ENCODE measurements at regions of chr11 and their contacts with region 1.

Region 1: DNA sequence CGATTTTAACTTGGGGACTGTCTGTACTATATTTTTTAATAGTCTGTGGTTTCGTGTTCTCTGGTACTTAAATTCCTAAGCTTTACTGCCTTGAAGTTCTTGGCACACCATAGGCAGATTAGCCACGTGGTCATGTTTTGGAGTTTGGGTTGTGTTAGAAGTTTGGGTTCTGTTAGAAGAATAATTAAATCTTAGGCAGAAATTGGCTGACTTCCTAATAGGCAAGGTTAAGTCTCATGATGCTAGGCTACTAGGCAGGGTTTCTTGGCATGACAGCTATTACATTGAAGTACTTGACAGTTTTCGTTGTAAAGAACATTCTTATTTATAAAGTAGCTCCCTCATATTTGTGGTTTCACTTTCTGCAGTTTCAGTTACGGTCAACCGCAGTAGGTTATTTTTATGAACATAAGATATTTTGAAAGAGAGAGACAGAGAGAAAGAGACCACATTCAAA is 30.0 kb upstream of the MMP7 start:
- DNase-seq: peak; percentile 69
- H3K4me3 Mint-ChIP-seq: peak overlapping the region; percentile 61
- H3K27ac Mint-ChIP-seq: peak overlapping the region; percentile 96
- H3K4me1 Mint-ChIP-seq: peaks cover 33% of the 10 kb centered on the region
- H3K27me3 Mint-ChIP-seq: no peaks in the 10 kb centered on the region
- CTCF ChIP-seq: no peak

Region 2: GRCh38 chr11:102513869-102514268 is 46.7 kb before region 1 on chr11:
- CTCF ChIA-PET with region 1: interaction called, 3 read pairs
- POLR2A ChIA-PET with region 1: interaction called, 12 read pairs
- intact Hi-C with region 1: no loop called
- DNase-seq: peak; percentile 92
- H3K4me3 Mint-ChIP-seq: no peak overlapping the region
- H3K27ac Mint-ChIP-seq: peak overlapping the region; percentile 44
- H3K4me1 Mint-ChIP-seq: peaks cover 11% of the 10 kb centered on the region
- H3K27me3 Mint-ChIP-seq: no peaks in the 10 kb centered on the region
- CTCF ChIP-seq: no peak

Region 3: DNA sequence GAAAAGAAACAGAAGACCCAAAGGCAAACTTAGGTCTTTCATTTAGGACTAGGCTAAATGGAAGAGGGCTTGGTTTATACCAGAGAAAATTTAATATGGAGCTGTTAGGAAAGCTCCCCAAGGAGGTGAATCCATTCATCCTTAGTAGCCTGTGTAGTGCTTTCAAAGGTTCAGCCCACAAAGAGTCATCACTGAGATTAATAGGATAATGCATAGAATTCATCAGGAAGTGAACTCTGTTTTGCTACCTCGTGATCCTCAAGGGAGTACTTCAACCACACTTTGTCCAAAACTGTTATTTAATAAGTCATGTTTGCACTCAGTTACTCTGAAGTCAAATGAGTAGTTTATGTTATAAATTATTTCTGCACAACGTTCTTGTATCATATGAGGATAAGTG is 13.3 kb after region 1 on chr11:
- CTCF ChIA-PET with region 1: no interaction called
- POLR2A ChIA-PET with region 1: interaction called, 14 read pairs
- intact Hi-C with region 1: no loop called
- DNase-seq: peak; percentile 62
- H3K4me3 Mint-ChIP-seq: no peak overlapping the region
- H3K27ac Mint-ChIP-seq: no peak overlapping the region
- H3K4me1 Mint-ChIP-seq: no peaks in the 10 kb centered on the region
- H3K27me3 Mint-ChIP-seq: no peaks in the 10 kb centered on the region
- CTCF ChIP-seq: no peak

Region 4: GRCh38 chr11:102599642-102600261 is 39.2 kb after region 1 on chr11:
- CTCF ChIA-PET with region 1: interaction called, 5 read pairs
- POLR2A ChIA-PET with region 1: interaction called, 17 read pairs
- intact Hi-C with region 1: loop called (anchors 1 kb)
- DNase-seq: peak; percentile 92
- H3K4me3 Mint-ChIP-seq: peak overlapping the region; percentile 31
- H3K27ac Mint-ChIP-seq: peak overlapping the region; percentile 88
- H3K4me1 Mint-ChIP-seq: peaks cover 37% of the 10 kb centered on the region
- H3K27me3 Mint-ChIP-seq: no peaks in the 10 kb centered on the region
- CTCF ChIP-seq: no peak

Region 5: DNA sequence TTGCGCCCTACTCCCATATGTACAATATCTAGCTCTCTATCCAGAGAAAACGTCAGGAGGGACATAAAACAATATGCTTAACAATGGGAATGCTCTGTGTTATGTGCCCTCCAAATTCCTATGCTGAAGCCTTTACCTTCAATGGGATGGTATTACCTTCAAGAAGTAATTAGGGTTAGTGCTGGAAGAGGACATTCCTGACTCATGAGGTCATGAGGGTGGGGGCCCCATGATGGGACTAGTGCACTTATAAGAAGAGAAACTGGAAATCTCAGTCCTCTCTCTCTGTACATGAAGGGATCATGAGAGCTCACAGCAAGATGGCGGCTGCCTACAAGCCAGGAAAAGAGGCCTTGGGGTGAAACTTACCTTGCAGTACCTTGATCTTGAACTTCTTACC is 44.3 kb after region 1 on chr11:
- CTCF ChIA-PET with region 1: interaction called, 5 read pairs
- POLR2A ChIA-PET with region 1: interaction called, 17 read pairs
- intact Hi-C with region 1: no loop called
- DNase-seq: no peak
- H3K4me3 Mint-ChIP-seq: no peak overlapping the region
- H3K27ac Mint-ChIP-seq: no peak overlapping the region
- H3K4me1 Mint-ChIP-seq: peaks cover 24% of the 10 kb centered on the region
- H3K27me3 Mint-ChIP-seq: no peaks in the 10 kb centered on the region
- CTCF ChIP-seq: no peak

Region 6: DNA sequence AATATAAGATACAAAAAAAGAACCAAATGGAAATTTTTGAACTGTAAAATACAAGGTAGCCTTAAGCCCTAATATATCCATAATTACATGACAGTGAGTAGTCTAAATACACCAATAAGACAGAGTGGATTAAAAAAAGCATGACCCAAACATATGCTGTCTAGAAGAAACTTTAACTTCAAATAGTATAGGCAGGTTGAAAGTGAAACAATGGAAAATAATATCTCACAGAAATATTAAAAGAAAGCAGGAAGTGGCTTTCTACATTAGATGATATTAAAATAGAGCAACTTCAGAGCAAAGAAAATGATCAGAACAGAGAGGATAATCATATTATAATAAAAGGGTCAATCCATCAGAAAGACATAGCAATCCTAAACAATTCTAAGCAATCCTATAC is 509.6 kb after region 1 on chr11:
- CTCF ChIA-PET with region 1: no interaction called
- POLR2A ChIA-PET with region 1: no interaction called
- intact Hi-C with region 1: no loop called
- DNase-seq: no peak
- H3K4me3 Mint-ChIP-seq: no peak overlapping the region
- H3K27ac Mint-ChIP-seq: peak overlapping the region; percentile 37
- H3K4me1 Mint-ChIP-seq: peaks cover 27% of the 10 kb centered on the region
- H3K27me3 Mint-ChIP-seq: no peaks in the 10 kb centered on the region
- CTCF ChIP-seq: no peak